ENCODE measurements at regions of chr10 and their contacts with region 1.

Region 1: DNA sequence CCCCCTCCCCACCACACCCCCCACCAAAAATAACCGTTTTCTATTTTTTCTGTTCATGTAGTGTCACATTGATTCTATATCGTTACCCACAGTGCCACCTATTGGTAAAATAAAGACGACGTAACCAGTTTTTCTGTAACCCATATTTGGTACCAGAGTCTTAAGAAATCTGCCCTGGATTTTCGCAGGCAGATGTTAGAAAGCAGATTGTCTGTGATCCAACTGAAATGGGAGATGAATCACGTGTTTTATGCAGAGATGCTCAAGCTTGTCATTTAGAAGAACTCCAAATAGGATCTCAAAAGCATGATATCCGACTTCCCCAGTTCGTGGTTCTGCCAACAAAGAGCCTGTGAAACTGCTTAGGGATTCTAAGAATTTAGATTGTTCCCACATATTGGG is 261.1 kb upstream of the CSTF2T start:
- DNase-seq: no peak
- H3K4me3 ChIP-seq: no peak overlapping the region
- H3K27ac ChIP-seq: no peak overlapping the region
- H3K4me1 ChIP-seq: peaks cover 0 to 14% (median 0%) of the 10 kb centered on the region in 4 donors
- H3K27me3 ChIP-seq: no peaks in the 10 kb centered on the region
- CTCF ChIP-seq: peak; percentile 47 to 60 (median 57)
- EP300 ChIP-seq: no peak
- POLR2A ChIP-seq: no peak

Region 2: DNA sequence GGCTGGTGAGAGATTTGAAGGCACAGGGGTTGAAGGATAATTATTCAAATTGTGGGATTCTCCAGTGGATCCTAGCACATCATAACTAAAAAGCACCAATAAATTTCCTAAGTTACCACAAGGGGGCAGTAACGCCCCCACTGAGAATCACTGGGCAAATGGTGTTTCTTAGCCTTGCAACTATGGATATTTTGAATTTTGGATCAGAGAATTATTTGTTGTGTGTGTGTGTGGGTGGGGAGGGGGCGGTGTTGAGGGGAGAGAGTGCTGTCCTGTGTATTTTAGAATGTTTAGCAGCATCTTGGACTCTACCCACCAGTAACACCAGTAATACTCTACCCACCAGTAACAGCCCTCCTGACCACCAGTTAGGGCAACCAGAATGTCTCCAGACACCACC is 949.5 kb before region 1 on chr10:
- in situ Hi-C with region 1: loop called in 1 of 4 experiments (anchors 25 kb)
- intact Hi-C with region 1: no loop called
- DNase-seq: no peak
- H3K4me3 ChIP-seq: no peak overlapping the region
- H3K27ac ChIP-seq: no peak overlapping the region
- H3K4me1 ChIP-seq: peaks cover 0 to 8% (median 0%) of the 10 kb centered on the region in 4 donors
- H3K27me3 ChIP-seq: no peaks in the 10 kb centered on the region
- CTCF ChIP-seq: peak; percentile 69 to 87 (median 80)
- EP300 ChIP-seq: no peak
- POLR2A ChIP-seq: no peak

Region 3: GRCh38 chr10:51074238-51075028 is 886.1 kb before region 1 on chr10 and contains the start of gene PRKG1:
- in situ Hi-C with region 1: loop called in 3 of 4 experiments (anchors 25 kb)
- intact Hi-C with region 1: no loop called
- DNase-seq: peak; percentile 71
- H3K4me3 ChIP-seq: peak within 1 kb of the TSS; percentile 43 to 64 (median 53)
- H3K27ac ChIP-seq: peak within 1 kb of the TSS; percentile 83 to 89 (median 88)
- H3K4me1 ChIP-seq: peaks cover 0 to 10% (median 4%) of the 10 kb centered on the region in 4 donors
- H3K27me3 ChIP-seq: peaks cover 9% of the 10 kb centered on the region
- CTCF ChIP-seq: no peak
- EP300 ChIP-seq: no peak
- POLR2A ChIP-seq: peak; percentile 37
- total RNA-seq, gene PRKG1: 17.6 to 30.6 (median 26.9) TPM

Region 4: DNA sequence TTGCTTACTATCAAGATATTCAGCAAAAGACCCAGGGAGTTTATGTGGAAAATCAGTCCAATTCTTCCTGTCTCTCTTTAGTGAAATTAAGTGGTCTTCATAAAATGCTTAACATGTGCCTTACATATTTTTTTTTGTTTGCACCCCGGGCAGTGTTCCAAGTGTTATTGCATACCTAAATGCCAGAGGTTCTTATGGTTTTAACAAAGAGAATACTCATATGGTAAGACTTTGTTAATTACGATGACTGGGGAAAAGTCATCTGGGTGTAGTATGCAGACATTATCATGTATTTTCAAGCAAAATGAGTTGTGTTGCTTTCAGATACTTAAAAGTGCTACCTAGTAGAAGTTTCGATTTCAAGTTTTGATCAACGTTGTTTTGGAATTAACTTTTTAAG is 803.6 kb before region 1 on chr10:
- in situ Hi-C with region 1: no loop called
- intact Hi-C with region 1: no loop called
- DNase-seq: no peak
- H3K4me3 ChIP-seq: no peak overlapping the region
- H3K27ac ChIP-seq: no peak overlapping the region
- H3K4me1 ChIP-seq: peaks cover 0 to 7% (median 0%) of the 10 kb centered on the region in 4 donors
- H3K27me3 ChIP-seq: no peaks in the 10 kb centered on the region
- CTCF ChIP-seq: no peak
- EP300 ChIP-seq: no peak
- POLR2A ChIP-seq: no peak

Measured in transverse colon (tissue), 4 donors.